ENCODE measurements at regions of chr2 and their contacts with region 1.

Region 1: GRCh38 chr2:54287532-54287931 is 31.5 kb upstream of the TSPYL6 start:
- DNase-seq: peak in 1 of 2 donors; percentile 46
- ATAC-seq: peak; percentile 70 to 95 (median 78)
- H3K4me3 ChIP-seq: no peak overlapping the region
- H3K27ac ChIP-seq: peak overlapping the region in 4 of 10 donors; percentile 22 to 62 (median 36)
- H3K4me1 ChIP-seq: peaks cover 0 to 13% (median 4%) of the 10 kb centered on the region in 9 donors
- H3K27me3 ChIP-seq: no peaks in the 10 kb centered on the region
- CTCF ChIP-seq: no peak

Region 2: GRCh38 chr2:54321047-54321446 is 33.5 kb after region 1 on chr2:
- intact Hi-C with region 1: loop called in 1 of 10 experiments (anchors 5 kb)
- DNase-seq: no peak
- ATAC-seq: peak in 1 of 8 donors; percentile 60
- H3K4me3 ChIP-seq: no peak overlapping the region
- H3K27ac ChIP-seq: no peak overlapping the region
- H3K4me1 ChIP-seq: peaks cover 0 to 15% (median 0%) of the 10 kb centered on the region in 9 donors
- H3K27me3 ChIP-seq: no peaks in the 10 kb centered on the region
- CTCF ChIP-seq: no peak